Motor neuron (in vitro differentiated cells): ENCODE measurements at regions of chr2 and their contacts with region 1.

Region 1: GRCh38 chr2:219736209-219736608 is 108.8 kb downstream of the SLC4A3 start:
- ATAC-seq: peak; percentile 69 to 86 (median 76)
- H3K4me3 ChIP-seq: no peak overlapping the region
- H3K27ac ChIP-seq: no peak overlapping the region
- H3K4me1 ChIP-seq: peaks cover 0 to 4% of the 10 kb centered on the region in 2 donors

Region 2: GRCh38 chr2:219836647-219837177 is 100.5 kb after region 1 on chr2:
- in situ Hi-C with region 1: loop called in 1 of 9 experiments (anchors 25 kb)
- ATAC-seq: peak in 3 of 8 experiments; percentile 35 to 69 (median 57)
- H3K4me3 ChIP-seq: no peak overlapping the region
- H3K27ac ChIP-seq: no peak overlapping the region
- H3K4me1 ChIP-seq: peaks cover 0 to 3% of the 10 kb centered on the region in 2 donors

Region 3: DNA sequence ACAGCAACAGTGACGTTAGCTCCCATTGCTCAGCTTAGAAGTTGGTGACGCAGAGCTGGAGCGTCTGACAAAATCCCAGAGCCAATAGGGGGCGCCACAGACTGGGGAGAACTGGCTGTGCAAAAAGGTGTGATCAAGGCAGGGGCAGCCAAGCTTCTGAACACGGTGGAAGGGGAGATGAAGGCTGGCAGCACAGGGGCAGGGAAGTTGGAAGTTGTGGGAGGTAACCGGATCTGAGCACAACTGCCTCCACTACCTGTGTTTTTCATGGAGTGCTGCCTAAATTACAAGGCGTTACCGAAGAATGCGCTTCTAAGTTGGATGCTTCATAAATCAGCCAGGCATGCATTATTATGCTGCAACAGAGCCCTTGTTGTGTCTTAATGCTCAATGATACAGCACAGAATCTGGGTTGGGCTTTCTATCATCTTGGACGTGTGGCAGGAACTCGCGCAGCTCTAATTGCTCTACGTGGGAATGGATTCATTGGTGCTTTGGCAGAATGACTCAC is 261.2 kb after region 1 on chr2:
- in situ Hi-C with region 1: loop called in 1 of 9 experiments (anchors 25 kb)
- ATAC-seq: peak in 5 of 8 experiments; percentile 66 to 92 (median 84)
- H3K4me3 ChIP-seq: no peak overlapping the region
- H3K27ac ChIP-seq: no peak overlapping the region
- H3K4me1 ChIP-seq: peaks cover 3 to 5% of the 10 kb centered on the region in 2 donors

Region 4: GRCh38 chr2:220053919-220054318 is 317.7 kb after region 1 on chr2:
- in situ Hi-C with region 1: loop called in 1 of 9 experiments (anchors 25 kb)
- ATAC-seq: no peak
- H3K4me3 ChIP-seq: no peak overlapping the region
- H3K27ac ChIP-seq: no peak overlapping the region
- H3K4me1 ChIP-seq: peaks cover 0 to 3% of the 10 kb centered on the region in 2 donors

Region 5: DNA sequence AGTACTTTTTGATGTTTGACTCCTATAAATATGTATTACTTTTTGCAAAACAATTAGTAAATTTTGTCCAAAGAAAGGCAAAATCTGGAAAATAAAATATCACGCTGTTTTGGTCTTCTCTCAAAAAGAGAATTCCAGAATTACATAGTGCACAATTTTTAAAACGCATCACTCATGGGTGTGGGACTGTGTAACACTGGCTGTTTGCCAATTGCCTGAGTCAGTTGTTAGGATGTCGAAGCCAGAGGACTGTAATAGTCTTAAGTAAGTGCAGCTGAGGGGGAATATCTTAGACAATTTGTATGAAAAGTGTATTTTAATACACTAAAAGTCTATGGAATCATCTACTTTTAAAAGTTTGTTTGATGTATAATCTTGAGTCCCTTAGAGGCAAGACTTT is 1860.0 kb after region 1 on chr2:
- in situ Hi-C with region 1: loop called in 2 of 9 experiments (anchors 25 kb)
- ATAC-seq: peak in 2 of 8 experiments; percentile 93
- H3K4me3 ChIP-seq: no peak overlapping the region
- H3K27ac ChIP-seq: no peak overlapping the region
- H3K4me1 ChIP-seq: peaks cover 0 to 11% of the 10 kb centered on the region in 2 donors